Activated naive CD4-positive, alpha-beta T cell treated with anti-CD3 and anti-CD28 coated beads for 36 hours (primary cell): ENCODE measurements at regions of chr5 and their contacts with region 1.

Region 1: GRCh38 chr5:177425801-177426565 is 493 bp upstream of the GRK6 start:
- DNase-seq: peak; percentile 100
- H3K4me3 Mint-ChIP-seq: peak overlapping the region; percentile 88
- H3K27ac Mint-ChIP-seq: peak overlapping the region; percentile 95
- H3K4me1 Mint-ChIP-seq: peaks cover 33% of the 10 kb centered on the region
- H3K27me3 Mint-ChIP-seq: no peaks in the 10 kb centered on the region

Region 2: DNA sequence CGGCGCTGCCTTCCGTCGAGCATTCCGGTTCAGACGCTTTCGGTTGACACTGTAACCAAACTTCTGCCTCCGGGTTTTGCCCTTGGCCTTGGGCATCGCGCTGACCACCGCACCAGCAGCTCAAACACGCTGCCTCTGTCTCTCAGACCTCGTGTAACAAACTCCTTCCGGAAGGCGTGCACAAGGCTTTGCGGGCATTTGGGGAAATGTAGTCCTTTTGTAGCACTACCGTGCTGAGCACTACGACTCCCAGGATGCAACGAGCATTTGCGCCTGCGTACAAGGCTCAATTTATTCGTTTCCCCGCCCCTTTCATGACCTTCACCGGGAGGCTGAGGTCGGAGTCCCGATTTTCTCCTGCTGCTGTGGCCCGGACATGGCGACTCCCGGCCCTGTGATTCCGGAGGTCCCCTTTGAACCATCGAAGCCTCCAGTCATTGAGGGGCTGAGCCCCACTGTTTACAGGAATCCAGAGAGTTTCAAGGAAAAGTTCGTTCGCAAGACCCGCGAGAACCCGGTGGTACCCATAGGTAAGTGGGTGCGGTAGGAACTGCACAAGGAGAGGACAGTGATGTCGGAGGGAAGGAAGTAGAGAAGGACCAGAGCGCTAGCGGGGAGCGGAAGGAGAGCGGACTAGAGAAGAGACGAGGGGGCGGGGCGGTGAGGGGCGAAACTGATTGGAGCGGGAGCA is 1037.4 kb before region 1 on chr5 and contains the starts of genes HIGD2A and NOP16:
- CTCF ChIA-PET with region 1: no interaction called
- intact Hi-C with region 1: loop called (anchors 5 kb)
- DNase-seq: peak; percentile 100
- H3K4me3 Mint-ChIP-seq: peak within 1 kb of the TSS; percentile 100
- H3K27ac Mint-ChIP-seq: peak within 1 kb of the TSS; percentile 100
- H3K4me1 Mint-ChIP-seq: peaks cover 33% of the 10 kb centered on the region
- H3K27me3 Mint-ChIP-seq: no peaks in the 10 kb centered on the region
- total RNA-seq, gene HIGD2A: 154 to 155 TPM
- total RNA-seq, gene NOP16: 42.1 to 43.1 TPM

Region 3: DNA sequence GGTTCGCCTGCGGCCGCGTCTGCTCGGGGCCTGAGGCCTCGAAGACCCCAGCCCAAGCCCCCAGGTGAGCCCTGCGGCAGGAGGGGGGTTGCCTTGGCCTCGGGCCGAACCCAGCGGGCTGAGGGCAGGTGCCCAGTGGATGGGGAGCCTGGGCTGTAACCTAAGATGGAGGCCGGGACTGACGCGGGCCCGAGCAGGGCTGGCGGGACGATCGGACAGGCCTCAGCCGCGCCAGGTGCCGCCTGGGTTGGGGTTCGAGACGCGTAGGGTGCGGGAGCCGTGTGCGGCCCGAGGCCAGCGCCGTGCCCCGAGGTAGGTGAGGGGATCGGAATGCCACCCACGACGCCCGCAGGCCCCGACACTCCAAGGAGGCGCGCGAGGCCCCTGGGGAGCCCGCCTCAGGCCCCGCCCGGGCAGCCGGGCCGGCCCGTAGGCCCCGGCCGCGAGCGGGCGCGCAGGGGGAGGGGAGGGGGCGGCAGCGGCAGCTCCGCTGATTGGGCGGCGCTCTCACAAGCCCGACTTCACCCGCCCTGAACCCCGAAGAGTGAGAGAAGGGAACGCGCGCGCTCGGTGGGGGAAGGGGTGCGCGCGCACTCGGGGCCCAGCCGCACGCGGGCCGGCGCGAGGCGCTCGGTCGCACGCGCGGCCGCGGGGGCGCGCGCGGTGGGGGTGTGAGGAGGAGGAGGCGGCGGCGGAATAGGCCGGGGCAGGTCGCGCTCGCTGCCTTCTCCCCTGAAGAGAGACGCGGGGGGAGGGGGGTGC is 292.7 kb before region 1 on chr5 and contains the start of gene NSD1:
- CTCF ChIA-PET with region 1: no interaction called
- intact Hi-C with region 1: loop called (anchors 1 kb)
- DNase-seq: peak; percentile 90
- H3K4me3 Mint-ChIP-seq: peak within 1 kb of the TSS; percentile 88
- H3K27ac Mint-ChIP-seq: peak within 1 kb of the TSS; percentile 88
- H3K4me1 Mint-ChIP-seq: peaks cover 52% of the 10 kb centered on the region
- H3K27me3 Mint-ChIP-seq: no peaks in the 10 kb centered on the region
- total RNA-seq, gene NSD1: 50.2 to 51.7 TPM

Region 4: DNA sequence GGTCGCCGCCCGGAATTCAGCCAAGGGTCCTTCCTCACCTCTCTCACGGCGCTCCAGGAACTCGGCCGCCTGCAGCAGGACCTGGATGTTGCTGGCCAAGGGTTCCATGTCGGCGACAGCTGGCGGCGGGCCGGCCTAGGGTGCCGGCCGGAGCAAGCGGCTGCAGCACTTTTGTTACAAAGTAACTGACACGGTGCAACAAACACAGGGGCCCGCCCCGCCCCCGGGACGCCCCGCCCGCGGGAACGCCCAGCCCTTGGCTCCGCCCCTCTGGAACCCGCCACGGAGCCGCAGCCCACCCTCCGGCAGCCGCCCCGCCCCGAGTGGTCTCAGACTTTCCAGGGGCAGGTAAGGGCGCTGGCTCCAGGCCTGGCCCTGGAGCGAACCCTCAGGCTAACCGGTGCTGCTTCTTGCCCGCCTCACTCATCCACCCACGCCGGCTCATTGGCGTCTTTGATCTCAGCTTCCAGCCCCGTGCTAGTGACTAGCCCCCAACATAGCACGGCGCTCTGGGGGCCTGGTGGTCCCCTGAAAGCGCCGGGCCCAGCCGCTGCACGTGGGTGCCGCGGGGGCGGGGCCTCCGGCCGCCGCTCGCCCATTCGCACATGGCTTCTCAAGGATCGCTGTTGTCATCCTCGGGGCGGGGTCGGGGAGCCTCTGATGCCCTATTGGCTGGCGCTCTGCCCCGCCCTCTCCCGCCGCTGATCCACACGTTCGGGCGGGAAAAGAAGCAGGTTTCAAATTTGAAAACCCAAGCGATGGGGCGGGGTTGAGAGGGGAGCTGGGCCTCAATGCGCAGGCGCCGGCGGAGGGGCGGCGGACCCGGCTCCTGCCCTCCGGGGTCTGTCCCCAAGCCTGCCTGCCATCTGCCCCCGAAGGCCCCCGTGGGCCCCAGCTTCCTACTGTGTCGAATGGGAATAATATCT is 114.0 kb before region 1 on chr5 and contains the start of gene MXD3:
- CTCF ChIA-PET with region 1: interaction called, 5 read pairs
- intact Hi-C with region 1: loop called (anchors 1 kb)
- DNase-seq: peak; percentile 99
- H3K4me3 Mint-ChIP-seq: peak within 1 kb of the TSS; percentile 97
- H3K27ac Mint-ChIP-seq: peak within 1 kb of the TSS; percentile 82
- H3K4me1 Mint-ChIP-seq: peaks cover 20% of the 10 kb centered on the region
- H3K27me3 Mint-ChIP-seq: peaks cover 3% of the 10 kb centered on the region
- total RNA-seq, gene MXD3: 45.0 to 51.7 TPM

Region 5: DNA sequence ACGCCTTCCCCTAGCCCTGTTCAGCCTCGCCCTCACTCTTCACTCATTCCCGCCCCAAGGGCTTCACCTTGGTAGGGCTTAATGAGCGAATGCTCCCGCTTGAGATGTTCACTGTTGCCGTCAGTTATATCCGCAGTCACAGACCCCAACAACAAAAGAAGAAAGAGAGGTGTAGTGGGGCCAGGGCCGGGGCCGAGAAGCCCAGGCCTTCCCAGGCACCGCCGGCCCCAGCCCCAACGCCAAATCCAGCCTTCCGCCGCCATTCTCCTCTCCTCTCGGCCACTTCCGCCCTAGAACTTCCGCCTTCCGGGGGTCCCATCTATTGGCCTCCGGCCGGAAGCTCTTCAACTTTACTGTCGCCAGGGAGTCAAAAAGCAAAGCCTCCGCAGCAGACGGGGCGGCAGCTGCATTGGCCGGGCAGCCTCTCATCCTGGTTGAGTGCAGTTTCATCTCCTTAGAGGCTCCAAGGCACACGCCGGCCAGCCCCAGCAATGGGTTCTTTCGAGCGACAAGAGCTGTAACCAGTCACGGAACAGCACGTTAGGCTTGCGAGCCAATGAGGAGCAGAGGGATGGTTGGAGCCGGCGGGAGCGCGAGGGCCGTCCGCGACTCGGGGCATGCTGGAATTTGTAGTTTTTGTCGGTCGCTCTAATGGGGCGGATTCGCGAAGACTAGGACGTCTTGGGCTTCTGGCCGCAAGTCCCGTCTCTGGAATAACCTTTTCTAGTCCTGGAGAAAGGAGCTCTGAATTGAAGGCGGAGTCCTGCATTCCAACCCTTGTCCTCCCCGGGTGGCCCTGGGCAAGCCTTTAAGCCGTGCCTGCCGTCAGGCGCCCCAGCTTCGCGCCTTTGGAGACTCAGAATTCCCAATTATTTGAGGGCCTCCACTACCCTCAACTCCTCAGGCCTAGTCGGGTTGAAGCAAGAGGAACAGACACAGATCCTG is 74.3 kb before region 1 on chr5 and contains the start of gene LMAN2:
- CTCF ChIA-PET with region 1: no interaction called
- intact Hi-C with region 1: loop called (anchors 1 kb)
- DNase-seq: peak; percentile 96
- H3K4me3 Mint-ChIP-seq: peak within 1 kb of the TSS; percentile 95
- H3K27ac Mint-ChIP-seq: peak within 1 kb of the TSS; percentile 100
- H3K4me1 Mint-ChIP-seq: peaks cover 43% of the 10 kb centered on the region
- H3K27me3 Mint-ChIP-seq: no peaks in the 10 kb centered on the region
- total RNA-seq, gene LMAN2: 82.2 to 83.9 TPM

Region 6: GRCh38 chr5:177362610-177363507 is 63.1 kb before region 1 on chr5:
- CTCF ChIA-PET with region 1: no interaction called
- intact Hi-C with region 1: loop called (anchors 2 kb)
- DNase-seq: peak; percentile 89
- H3K4me3 Mint-ChIP-seq: peak overlapping the region; percentile 75
- H3K27ac Mint-ChIP-seq: peak overlapping the region; percentile 84
- H3K4me1 Mint-ChIP-seq: peaks cover 74% of the 10 kb centered on the region
- H3K27me3 Mint-ChIP-seq: no peaks in the 10 kb centered on the region

Region 7: GRCh38 chr5:177454397-177455035 is 28.5 kb after region 1 on chr5:
- CTCF ChIA-PET with region 1: interaction called, 21 read pairs
- intact Hi-C with region 1: loop called (anchors 1 kb)
- DNase-seq: peak; percentile 91
- H3K4me3 Mint-ChIP-seq: peak overlapping the region; percentile 79
- H3K27ac Mint-ChIP-seq: no peak overlapping the region
- H3K4me1 Mint-ChIP-seq: peaks cover 20% of the 10 kb centered on the region
- H3K27me3 Mint-ChIP-seq: no peaks in the 10 kb centered on the region